ENCODE measurements at regions of chr9 and their contacts with region 1.

Region 1: DNA sequence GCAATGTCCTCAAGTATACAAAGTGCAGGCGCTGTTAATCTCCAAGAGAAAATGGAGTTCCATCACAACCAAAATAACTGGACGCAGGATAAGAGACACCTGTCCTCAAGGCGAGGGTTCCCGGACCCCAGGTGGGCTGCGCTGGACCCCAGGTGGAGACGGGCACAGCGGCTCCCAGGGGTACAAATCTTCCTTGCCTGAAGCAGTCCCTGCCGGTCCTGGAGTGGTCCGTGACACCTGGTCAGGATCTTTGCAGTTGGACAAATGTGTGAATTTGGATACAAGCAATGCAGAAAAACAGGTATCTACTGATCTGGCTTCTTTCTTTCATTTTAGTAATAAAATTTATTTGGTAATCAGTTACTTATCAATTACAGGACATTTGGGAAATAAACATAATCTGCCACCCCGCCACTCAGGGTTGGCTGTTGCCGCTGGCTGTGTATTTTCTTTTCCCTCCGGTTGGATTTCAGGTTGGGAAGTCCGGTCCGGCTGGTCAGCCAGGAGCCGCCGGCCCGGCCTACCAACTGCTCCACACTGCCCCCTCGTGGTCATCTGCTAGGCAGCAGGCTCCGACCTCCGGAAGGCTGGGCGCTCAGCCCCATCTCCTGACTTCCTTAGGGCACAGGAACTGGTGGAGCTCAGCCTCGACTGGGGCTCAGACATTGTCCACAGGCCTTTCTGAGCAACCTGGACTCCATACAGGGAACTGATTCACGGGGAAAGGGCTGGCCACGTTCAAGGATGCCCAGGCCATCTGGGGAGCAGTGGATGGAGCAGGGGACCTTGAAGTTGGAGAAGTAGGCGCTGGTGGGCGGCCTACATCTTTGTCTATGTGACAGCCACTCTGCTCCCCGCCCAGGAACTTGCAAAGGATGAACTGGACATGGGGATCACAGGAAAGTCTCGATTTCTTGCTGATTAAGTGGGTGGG is 43.4 kb downstream of the NXNL2 start:
- DNase-seq: peak; percentile 96
- H3K4me3 ChIP-seq: peak overlapping the region in 2 of 4 donors; percentile 10 to 25
- H3K27ac ChIP-seq: no peak overlapping the region
- H3K4me1 ChIP-seq: peaks cover 0 to 32% (median 22%) of the 10 kb centered on the region in 4 donors
- H3K27me3 ChIP-seq: no peaks in the 10 kb centered on the region
- CTCF ChIP-seq: peak in 2 of 3 experiments; percentile 91 to 97
- EP300 ChIP-seq: no peak
- POLR2A ChIP-seq: no peak

Region 2: DNA sequence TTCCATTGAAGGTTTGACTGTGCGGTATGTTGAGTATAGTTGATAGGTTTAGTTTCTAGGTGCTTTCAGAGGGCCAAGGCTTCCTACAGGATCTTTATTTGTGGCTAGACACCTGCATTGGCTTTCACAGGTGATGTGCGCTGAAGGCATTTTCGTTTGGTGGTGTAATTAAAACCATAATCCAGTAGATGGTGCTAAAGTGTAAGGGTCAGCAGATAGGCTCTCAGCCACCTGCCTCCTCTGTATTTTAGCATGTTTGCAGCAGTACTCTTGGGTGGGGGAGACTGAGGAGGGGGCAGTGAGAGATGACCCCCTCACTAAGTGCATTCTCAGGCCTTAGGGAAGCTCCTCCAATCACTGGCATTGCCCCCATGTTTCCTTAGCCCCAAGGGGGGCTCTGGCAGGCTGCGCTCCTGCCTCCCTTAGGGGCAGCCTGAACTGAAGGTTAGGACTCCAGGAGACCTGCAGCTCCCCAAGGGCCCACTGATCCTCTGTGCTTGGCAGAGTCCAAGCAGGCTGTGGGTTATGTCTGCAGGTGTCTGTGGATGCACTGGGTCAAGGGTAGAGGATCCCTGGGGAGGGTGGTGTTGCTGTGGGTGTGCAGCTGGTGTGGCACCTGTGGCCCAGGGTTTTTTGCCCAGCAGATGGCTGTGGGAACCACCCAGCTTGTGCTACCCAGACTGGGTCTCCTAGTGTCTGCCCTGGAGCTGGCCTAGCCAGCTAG is 627.5 kb before region 1 on chr9:
- intact Hi-C with region 1: loop called (anchors 10 kb)
- DNase-seq: no peak
- H3K4me3 ChIP-seq: no peak overlapping the region
- H3K27ac ChIP-seq: no peak overlapping the region
- H3K4me1 ChIP-seq: no peaks in the 10 kb centered on the region
- H3K27me3 ChIP-seq: peaks cover 0 to 15% (median 0%) of the 10 kb centered on the region in 4 donors
- CTCF ChIP-seq: peak in 2 of 3 experiments; percentile 23 to 34
- EP300 ChIP-seq: no peak
- POLR2A ChIP-seq: no peak

Region 3: GRCh38 chr9:88106491-88106890 is 471.9 kb before region 1 on chr9:
- intact Hi-C with region 1: loop called (anchors 2 kb)
- DNase-seq: no peak
- H3K4me3 ChIP-seq: no peak overlapping the region
- H3K27ac ChIP-seq: no peak overlapping the region
- H3K4me1 ChIP-seq: no peaks in the 10 kb centered on the region
- H3K27me3 ChIP-seq: peaks cover 0 to 7% (median 0%) of the 10 kb centered on the region in 4 donors
- CTCF ChIP-seq: peak; percentile 59 to 70 (median 63)
- EP300 ChIP-seq: no peak
- POLR2A ChIP-seq: no peak

Region 4: GRCh38 chr9:88197781-88198340 is 380.5 kb before region 1 on chr9:
- intact Hi-C with region 1: loop called (anchors 10 kb)
- DNase-seq: peak; percentile 29
- H3K4me3 ChIP-seq: peak overlapping the region; percentile 33 to 55 (median 42)
- H3K27ac ChIP-seq: peak overlapping the region; percentile 38 to 62 (median 58)
- H3K4me1 ChIP-seq: peaks cover 13 to 35% (median 27%) of the 10 kb centered on the region in 4 donors
- H3K27me3 ChIP-seq: no peaks in the 10 kb centered on the region
- CTCF ChIP-seq: no peak
- EP300 ChIP-seq: no peak
- POLR2A ChIP-seq: no peak